Heart right ventricle (tissue), 16 donors: ENCODE measurements at regions of chr3 and their contacts with region 1.

Region 1: GRCh38 chr3:128426128-128426921 is 40.4 kb downstream of the DNAJB8 start:
- DNase-seq: peak in 1 of 2 donors; percentile 56
- ATAC-seq: peak; percentile 76 to 93 (median 86)
- H3K4me3 ChIP-seq: peak overlapping the region in 9 of 10 donors; percentile 8 to 46 (median 35)
- H3K27ac ChIP-seq: no peak overlapping the region
- H3K4me1 ChIP-seq: peaks cover 0 to 16% (median 7%) of the 10 kb centered on the region in 9 donors
- H3K27me3 ChIP-seq: peaks cover 0 to 32% (median 19%) of the 10 kb centered on the region in 7 donors
- CTCF ChIP-seq: peak; percentile 69 to 98 (median 88)

Region 2: GRCh38 chr3:128170805-128171516 is 255.4 kb before region 1 on chr3:
- intact Hi-C with region 1: loop called in 3 of 10 experiments (anchors 10 kb)
- DNase-seq: peak; percentile 23 to 70
- ATAC-seq: peak in 7 of 8 donors; percentile 66 to 76 (median 72)
- H3K4me3 ChIP-seq: no peak overlapping the region
- H3K27ac ChIP-seq: no peak overlapping the region
- H3K4me1 ChIP-seq: peaks cover 11 to 80% (median 54%) of the 10 kb centered on the region in 9 donors
- H3K27me3 ChIP-seq: no peaks in the 10 kb centered on the region
- CTCF ChIP-seq: peak; percentile 30 to 87 (median 71)

Region 3: DNA sequence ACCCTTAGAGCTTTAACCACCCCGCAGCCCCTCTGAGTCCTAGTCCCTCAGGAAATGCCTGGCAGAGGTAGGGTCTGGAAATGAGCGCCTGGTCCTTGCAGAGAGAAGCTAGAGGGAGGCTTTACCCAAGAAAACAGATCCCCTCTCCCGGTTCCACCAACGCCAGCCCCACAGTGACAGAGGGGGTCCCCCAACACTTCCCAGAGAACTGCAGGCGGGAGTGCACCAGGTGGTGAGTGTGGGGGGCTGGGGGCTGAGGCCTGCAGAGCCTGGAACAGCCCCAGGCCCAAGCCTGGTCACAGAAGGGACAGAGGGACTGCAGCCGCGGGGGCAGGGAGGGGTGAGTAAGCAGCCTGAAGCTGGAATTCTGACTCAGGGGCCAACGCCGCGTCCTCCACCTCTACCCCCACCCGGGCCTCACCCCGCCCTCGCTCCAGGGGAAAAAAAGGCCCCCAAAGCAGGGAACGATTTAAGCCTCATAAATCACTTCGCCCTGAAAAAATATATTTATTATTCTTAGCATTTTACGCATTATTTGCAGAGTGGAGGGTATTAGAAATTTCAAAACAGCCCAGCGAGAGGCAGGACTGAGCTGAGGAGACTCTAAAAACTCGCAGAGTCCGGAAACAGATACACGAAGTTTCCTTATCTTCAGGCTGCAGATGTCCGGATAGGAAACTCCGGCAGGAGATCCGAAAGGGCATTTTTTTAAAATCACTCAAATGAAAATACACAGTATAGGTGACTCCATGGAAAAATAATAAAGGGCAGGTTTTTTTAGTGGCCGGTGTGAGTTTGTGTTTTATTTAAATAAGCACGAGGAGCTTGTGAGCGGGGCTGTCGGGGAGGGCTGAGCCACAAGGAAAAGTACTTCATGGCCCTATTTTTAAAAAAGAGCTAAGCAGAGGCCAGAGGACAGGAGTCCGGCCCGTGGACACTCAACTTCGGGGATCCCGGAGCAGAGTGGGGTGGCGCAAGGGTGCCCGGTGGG is 56.6 kb after region 1 on chr3:
- intact Hi-C with region 1: loop called in 2 of 10 experiments (anchors 5 kb)
- DNase-seq: peak in 1 of 2 donors; percentile 73
- ATAC-seq: peak; percentile 11 to 56 (median 45)
- H3K4me3 ChIP-seq: peak overlapping the region; percentile 23 to 85 (median 67)
- H3K27ac ChIP-seq: peak overlapping the region; percentile 38 to 98 (median 93)
- H3K4me1 ChIP-seq: peaks cover 6 to 91% (median 61%) of the 10 kb centered on the region in 9 donors
- H3K27me3 ChIP-seq: peaks cover 0 to 90% (median 67%) of the 10 kb centered on the region in 7 donors
- CTCF ChIP-seq: peak in 5 of 9 donors; percentile 6 to 52 (median 26)

Region 4: DNA sequence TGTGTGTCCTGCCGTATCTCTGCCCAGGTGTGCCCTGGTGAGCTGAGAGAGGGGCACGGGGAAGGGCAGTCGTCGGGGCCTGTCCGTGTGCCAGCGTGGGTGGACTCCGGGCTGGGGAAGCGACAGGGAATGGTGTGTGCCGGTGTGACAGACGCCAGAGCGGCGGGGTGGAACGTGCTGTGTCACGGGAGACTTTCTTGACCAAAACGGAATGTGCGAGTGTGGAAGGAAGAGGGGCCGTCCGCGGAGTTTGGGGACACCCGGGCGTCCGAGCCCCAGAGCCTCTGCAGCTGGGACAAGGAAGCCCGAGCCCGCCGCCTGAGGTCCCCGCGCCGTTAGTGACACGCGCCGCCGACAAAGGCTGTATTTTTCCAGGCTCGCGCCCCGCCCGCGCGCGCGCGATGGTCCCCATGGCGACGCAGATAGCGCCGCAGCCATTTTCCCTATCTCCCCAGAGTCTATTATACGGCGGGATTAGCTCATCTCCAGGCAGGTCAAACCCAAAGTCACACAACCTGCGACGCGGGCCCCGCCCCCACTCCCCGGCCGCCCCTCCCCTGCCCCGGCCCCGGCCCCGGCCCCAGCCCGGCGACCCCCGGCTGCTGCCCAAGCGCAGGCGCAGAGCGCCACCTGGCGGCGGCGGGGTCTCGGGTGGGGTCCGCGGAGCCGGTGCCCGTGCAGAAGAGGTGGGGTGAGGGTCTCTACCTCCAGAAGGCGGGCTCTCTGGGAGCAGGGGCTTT is 71.2 kb after region 1 on chr3:
- intact Hi-C with region 1: loop called in 9 of 10 experiments (anchors 2 to 5 kb)
- DNase-seq: peak; percentile 76 to 78
- ATAC-seq: peak; percentile 66 to 88 (median 82)
- H3K4me3 ChIP-seq: peak overlapping the region; percentile 32 to 65 (median 55)
- H3K27ac ChIP-seq: peak overlapping the region in 2 of 10 donors; percentile 6 to 55
- H3K4me1 ChIP-seq: peaks cover 2 to 31% (median 27%) of the 10 kb centered on the region in 9 donors
- H3K27me3 ChIP-seq: peaks cover 3 to 89% (median 47%) of the 10 kb centered on the region in 7 donors
- CTCF ChIP-seq: peak; percentile 57 to 90 (median 81)

Region 5: GRCh38 chr3:128537121-128537703 is 110.9 kb after region 1 on chr3:
- intact Hi-C with region 1: no loop called
- DNase-seq: no peak
- ATAC-seq: no peak
- H3K4me3 ChIP-seq: no peak overlapping the region
- H3K27ac ChIP-seq: no peak overlapping the region
- H3K4me1 ChIP-seq: no peaks in the 10 kb centered on the region
- H3K27me3 ChIP-seq: peaks cover 0 to 39% (median 9%) of the 10 kb centered on the region in 7 donors
- CTCF ChIP-seq: no peak

Region 6: DNA sequence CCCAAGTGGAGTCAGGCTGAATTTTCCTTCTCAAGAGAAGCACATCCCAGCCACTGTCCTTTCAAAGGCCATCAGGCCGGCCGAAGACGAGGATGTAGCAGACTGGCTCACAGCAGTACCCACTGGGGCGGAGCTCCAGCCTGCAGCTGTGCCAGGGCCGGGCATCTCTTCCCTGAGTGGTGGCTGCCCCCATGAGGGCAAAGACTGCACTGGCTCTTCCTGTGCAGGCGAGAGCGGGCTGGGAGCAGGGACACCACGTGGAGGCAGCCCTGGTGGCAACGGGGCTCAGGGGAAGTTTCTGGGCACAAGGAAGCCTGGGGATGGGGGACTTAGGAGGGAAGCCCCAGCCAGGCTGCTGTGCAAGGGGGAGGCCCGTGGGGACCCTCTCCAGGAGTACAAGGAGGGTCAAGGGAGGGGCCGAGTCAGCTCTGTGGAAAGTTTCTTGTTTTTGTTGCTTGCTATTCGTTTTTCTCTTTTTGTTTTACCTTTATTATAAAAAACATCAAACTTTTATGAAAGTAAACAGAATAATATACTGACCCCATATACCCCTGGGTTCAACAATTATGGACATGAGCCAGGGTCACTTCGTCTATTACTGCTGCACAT is 158.2 kb after region 1 on chr3:
- intact Hi-C with region 1: loop called in 4 of 10 experiments (anchors 5 kb)
- DNase-seq: peak; percentile 74 to 75
- ATAC-seq: peak; percentile 94 to 100 (median 98)
- H3K4me3 ChIP-seq: no peak overlapping the region
- H3K27ac ChIP-seq: no peak overlapping the region
- H3K4me1 ChIP-seq: peaks cover 0 to 11% (median 3%) of the 10 kb centered on the region in 9 donors
- H3K27me3 ChIP-seq: peaks cover 0 to 4% (median 0%) of the 10 kb centered on the region in 7 donors
- CTCF ChIP-seq: peak; percentile 44 to 84 (median 74)

Region 7: GRCh38 chr3:128590948-128591347 is 164.6 kb after region 1 on chr3:
- intact Hi-C with region 1: loop called in 4 of 10 experiments (anchors 5 to 10 kb)
- DNase-seq: no peak
- ATAC-seq: peak in 1 of 8 donors; percentile 43
- H3K4me3 ChIP-seq: no peak overlapping the region
- H3K27ac ChIP-seq: peak overlapping the region in 1 of 10 donors; percentile 60
- H3K4me1 ChIP-seq: peaks cover 0 to 18% (median 0%) of the 10 kb centered on the region in 9 donors
- H3K27me3 ChIP-seq: peaks cover 0 to 10% (median 0%) of the 10 kb centered on the region in 7 donors
- CTCF ChIP-seq: peak in 1 of 9 donors; percentile 19

Region 8: DNA sequence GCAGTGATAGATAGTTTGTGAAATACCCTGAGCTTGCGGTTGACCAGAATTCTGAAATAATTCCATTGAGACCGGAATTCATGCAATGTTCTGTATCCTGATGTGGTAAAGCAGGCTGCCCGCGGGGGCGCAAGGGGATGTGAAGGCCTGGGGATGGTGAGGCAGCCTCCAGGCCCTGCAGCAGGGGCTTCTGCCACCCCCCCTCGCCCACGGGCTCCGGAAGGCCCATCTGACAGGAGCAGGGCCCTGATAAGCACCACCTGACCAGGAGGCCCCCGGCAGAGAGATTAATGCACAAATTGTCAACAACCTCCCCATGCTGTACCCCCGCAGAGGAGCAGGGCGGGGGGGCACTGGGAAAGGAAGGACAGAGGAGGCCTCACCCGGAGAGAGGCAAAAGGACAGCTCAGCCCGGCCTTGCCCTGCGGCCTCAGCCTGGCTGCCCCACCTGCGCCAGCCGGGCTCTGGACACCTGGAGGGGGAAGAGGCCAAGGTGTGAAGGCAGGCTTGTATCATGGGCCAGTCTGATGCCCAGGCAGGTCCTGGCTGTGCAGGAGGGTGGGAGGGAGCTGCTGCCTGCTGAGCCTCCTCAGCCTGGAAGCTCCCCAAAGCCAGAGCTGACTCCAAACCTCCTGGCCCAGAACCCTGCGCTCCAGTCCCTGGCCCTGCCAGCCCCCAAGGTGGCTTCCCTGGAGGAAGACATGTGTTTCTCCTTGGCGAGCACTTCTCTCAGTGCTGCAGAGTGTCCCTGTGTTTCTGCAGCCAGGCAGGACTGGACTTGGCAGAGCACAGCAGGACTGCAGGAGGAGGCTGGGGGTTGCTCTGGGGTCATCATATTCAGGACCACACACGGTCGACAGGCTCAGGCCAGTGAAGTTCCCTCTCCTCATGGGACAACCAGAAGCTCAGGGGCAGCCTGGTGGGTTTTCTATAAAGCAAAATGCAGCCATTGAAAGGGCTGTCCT is 177.8 kb after region 1 on chr3:
- intact Hi-C with region 1: loop called (anchors 1 to 10 kb)
- DNase-seq: no peak
- ATAC-seq: no peak
- H3K4me3 ChIP-seq: no peak overlapping the region
- H3K27ac ChIP-seq: no peak overlapping the region
- H3K4me1 ChIP-seq: peaks cover 0 to 30% (median 11%) of the 10 kb centered on the region in 9 donors
- H3K27me3 ChIP-seq: no peaks in the 10 kb centered on the region
- CTCF ChIP-seq: no peak